Brain microvascular endothelial cell (primary cell): ENCODE measurements at regions of chr3 and their contacts with region 1.

Region 1: DNA sequence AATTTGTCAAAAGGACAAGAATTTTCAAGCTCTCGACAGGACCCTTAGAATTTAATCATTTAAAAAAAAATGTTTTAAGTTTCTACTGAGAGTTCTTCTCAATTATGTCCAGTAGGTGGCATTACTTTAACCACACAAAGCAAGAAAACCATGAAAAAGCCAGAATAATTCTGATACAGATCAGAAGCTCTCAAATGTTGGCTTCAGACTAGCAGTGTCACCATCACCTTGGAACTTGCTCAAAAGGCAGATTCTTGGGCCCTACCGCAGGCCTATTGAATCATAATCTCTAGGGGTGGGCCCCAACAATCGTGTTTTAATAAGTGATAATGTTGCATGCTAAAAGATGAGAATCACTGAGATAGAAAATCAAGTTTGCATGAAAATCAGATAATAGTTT is 99.5 kb upstream of the KCNMB2 start:
- DNase-seq: peak; percentile 23
- H3K4me3 ChIP-seq: no peak overlapping the region
- H3K27ac ChIP-seq: no peak overlapping the region
- H3K27me3 ChIP-seq: no peaks in the 10 kb centered on the region
- CTCF ChIP-seq: peak; percentile 39

Region 2: DNA sequence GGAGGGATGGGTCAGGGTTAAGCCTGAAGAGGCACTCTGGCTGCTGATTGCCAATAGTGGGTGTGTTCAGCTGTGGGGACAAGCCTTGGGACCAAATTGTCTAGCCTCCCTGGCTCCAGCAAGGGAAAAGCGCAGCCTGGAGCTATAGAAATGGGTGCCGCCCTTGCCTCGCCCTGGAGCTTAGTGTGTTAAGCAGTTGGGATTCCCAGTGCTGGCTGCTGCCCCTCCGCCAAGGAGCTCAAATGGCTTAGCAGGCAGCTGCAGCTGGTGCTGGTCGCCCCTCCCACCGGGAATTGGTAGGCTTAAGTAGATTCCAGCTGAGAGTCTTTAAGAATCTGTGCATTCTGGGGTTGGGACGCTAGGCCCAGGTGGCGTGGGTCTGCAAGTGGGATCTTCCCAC is 576.6 kb before region 1 on chr3:
- in situ Hi-C with region 1: no loop called
- DNase-seq: no peak
- H3K4me3 ChIP-seq: no peak overlapping the region
- H3K27ac ChIP-seq: no peak overlapping the region
- H3K27me3 ChIP-seq: no peaks in the 10 kb centered on the region
- CTCF ChIP-seq: no peak

Region 3: GRCh38 chr3:178966299-178967176 is 529.8 kb after region 1 on chr3:
- in situ Hi-C with region 1: loop called (anchors 25 kb)
- DNase-seq: no peak
- H3K4me3 ChIP-seq: peak overlapping the region; percentile 7
- H3K27ac ChIP-seq: no peak overlapping the region
- H3K27me3 ChIP-seq: no peaks in the 10 kb centered on the region
- CTCF ChIP-seq: peak; percentile 40